Sciatic nerve (tissue), 2 donors: ENCODE measurements at regions of chr9 and their contacts with region 1.

Region 1: GRCh38 chr9:111533099-111533790 is 8.3 kb downstream of the ZNF483 start:
- DNase-seq: no peak
- ATAC-seq: no peak

Region 2: GRCh38 chr9:111572950-111573604 is 39.8 kb after region 1 on chr9:
- intact Hi-C with region 1: loop called (anchors 1 kb)
- DNase-seq: no peak
- ATAC-seq: peak; percentile 60

Region 3: GRCh38 chr9:111691672-111692329 is 158.6 kb after region 1 on chr9:
- intact Hi-C with region 1: no loop called
- DNase-seq: no peak
- ATAC-seq: no peak